ENCODE measurements at regions of chr10 and their contacts with region 1.

Region 1: GRCh38 chr10:17643755-17644484 is at the start of gene STAM:
- DNase-seq: peak; percentile 91
- H3K4me3 Mint-ChIP-seq: peak within 1 kb of the TSS; percentile 95
- H3K27ac Mint-ChIP-seq: peak within 1 kb of the TSS; percentile 100
- H3K4me1 Mint-ChIP-seq: peaks cover 12% of the 10 kb centered on the region
- H3K27me3 Mint-ChIP-seq: no peaks in the 10 kb centered on the region
- CTCF ChIP-seq: no peak
- total RNA-seq, gene STAM: 35.4 and 55.5 TPM in 2 replicates

Region 2: DNA sequence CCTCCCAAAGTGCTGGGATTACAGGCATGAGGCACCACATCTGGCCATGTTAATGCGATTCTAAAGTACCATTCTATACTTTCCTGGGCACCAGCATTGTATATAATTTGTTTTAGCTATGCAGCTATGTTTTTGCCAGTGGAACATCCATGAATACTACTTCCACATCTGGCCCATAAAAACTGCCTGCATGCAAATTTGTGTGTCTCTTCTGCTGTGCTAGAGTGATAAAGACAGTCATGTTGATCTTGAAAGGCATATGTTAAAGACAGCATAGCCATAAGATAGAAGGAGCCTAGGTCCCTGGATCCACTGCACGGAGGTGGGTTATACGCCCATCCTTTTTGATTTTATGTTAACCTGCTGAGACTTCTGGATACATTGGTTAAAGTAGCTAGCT is 79.0 kb before region 1 on chr10:
- CTCF ChIA-PET with region 1: no interaction called
- POLR2A ChIA-PET with region 1: no interaction called
- intact Hi-C with region 1: no loop called
- DNase-seq: no peak
- H3K4me3 Mint-ChIP-seq: no peak overlapping the region
- H3K27ac Mint-ChIP-seq: no peak overlapping the region
- H3K4me1 Mint-ChIP-seq: no peaks in the 10 kb centered on the region
- H3K27me3 Mint-ChIP-seq: no peaks in the 10 kb centered on the region
- CTCF ChIP-seq: no peak

Region 3: DNA sequence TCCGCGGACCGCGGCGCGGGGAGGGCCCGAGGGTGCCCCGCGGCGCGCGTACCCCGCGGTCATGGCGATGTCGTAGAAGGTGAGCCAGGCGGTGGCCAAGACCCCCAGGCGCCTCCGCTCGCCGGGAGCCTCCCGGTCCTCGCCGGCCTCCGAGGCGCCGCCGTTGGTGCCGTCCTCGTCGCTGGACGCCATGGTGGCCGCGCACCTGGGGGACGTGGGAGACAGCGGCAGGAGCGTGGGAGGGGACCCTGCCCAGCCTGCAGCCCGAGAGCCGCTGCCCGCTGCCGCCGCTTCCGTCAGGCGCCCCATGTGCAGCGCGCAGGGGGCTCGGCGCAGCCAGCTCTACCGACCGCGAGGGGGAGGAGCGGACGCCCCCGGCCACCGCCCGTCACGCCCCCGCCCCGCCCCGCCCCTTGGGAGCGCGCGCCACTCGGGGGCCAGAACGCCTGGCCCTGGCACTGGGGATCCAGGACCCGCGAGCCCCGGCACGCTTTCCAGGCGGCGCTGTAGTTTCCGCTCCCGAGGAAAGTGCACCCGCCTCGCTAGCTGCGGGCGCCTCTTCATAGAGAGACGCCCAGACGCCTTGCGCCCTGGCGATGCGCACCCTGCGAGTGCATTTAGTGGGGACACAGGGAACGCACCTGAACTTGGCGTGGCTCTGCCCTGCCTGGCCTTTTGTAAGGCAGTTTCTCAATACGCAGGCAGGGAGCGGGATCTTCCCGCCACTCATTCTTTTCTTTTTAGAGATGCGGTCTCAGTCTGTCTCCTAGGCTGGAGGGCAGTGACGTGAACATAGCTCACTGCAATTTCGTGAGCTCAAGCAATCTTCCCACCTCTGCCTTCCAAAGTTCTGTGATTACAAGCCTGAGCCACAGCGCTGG is 26.6 kb before region 1 on chr10 and contains the start of gene HACD1:
- CTCF ChIA-PET with region 1: interaction called, 13 read pairs
- POLR2A ChIA-PET with region 1: interaction called, 126 read pairs
- intact Hi-C with region 1: loop called (anchors 1 kb)
- DNase-seq: peak; percentile 74
- H3K4me3 Mint-ChIP-seq: peak within 1 kb of the TSS; percentile 80
- H3K27ac Mint-ChIP-seq: no peak within 1 kb of the TSS
- H3K4me1 Mint-ChIP-seq: peaks cover 8% of the 10 kb centered on the region
- H3K27me3 Mint-ChIP-seq: no peaks in the 10 kb centered on the region
- CTCF ChIP-seq: peak; percentile 10
- total RNA-seq, gene HACD1: 29.6 and 34.2 TPM in 2 replicates

Region 4: DNA sequence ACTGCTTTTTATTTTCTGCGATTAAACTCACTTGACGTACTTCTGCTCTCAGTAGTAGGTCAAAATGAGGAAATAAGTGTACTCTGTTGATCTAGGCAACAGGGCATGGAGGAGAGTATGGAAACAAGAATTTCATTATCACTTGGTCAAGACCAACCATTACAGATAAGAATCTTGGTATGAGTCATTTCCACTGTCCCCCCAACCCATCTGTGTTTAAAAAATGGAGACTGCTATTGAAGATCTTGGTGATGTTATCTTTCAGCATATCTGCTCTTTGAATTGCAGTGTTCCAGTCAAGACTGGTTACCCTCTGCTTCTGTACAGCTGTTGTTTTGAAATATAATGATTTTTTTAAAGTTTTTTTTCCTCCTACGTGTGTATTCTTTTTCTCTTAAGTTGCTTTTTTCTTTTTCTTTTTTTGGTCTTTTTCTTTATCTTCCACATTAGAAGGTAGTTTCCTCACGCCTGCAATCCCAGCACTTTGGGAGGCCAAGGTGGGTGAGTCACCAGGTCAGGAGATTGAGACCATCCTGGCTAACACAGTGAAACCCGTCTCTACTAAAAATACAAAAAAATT is 11.7 kb after region 1 on chr10:
- CTCF ChIA-PET with region 1: no interaction called
- POLR2A ChIA-PET with region 1: interaction called, 95 read pairs
- intact Hi-C with region 1: no loop called
- DNase-seq: peak; percentile 37
- H3K4me3 Mint-ChIP-seq: no peak overlapping the region
- H3K27ac Mint-ChIP-seq: peak overlapping the region; percentile 60
- H3K4me1 Mint-ChIP-seq: peaks cover 43% of the 10 kb centered on the region
- H3K27me3 Mint-ChIP-seq: no peaks in the 10 kb centered on the region
- CTCF ChIP-seq: no peak

Region 5: DNA sequence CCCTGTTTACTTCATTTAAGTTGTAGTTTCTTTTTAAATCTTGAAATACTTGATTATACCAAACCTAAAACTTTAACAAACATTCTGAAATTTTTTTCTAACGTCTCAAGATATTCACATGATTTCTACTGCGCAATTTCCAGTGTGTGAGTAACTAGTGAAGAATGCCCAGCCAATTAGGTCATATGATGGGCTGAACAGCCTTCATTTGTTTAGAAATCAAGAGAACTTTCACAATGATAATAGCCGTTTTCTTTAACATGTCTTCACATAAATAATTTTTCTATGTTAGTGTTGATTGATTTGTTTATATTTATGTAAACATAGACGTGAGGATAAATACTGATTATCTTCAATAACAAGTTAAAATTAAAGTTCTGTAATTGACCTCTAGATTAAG is 21.8 kb after region 1 on chr10:
- CTCF ChIA-PET with region 1: interaction called, 33 read pairs
- POLR2A ChIA-PET with region 1: interaction called, 151 read pairs
- intact Hi-C with region 1: no loop called
- DNase-seq: peak; percentile 82
- H3K4me3 Mint-ChIP-seq: peak overlapping the region; percentile 63
- H3K27ac Mint-ChIP-seq: peak overlapping the region; percentile 97
- H3K4me1 Mint-ChIP-seq: peaks cover 28% of the 10 kb centered on the region
- H3K27me3 Mint-ChIP-seq: no peaks in the 10 kb centered on the region
- CTCF ChIP-seq: no peak

Region 6: DNA sequence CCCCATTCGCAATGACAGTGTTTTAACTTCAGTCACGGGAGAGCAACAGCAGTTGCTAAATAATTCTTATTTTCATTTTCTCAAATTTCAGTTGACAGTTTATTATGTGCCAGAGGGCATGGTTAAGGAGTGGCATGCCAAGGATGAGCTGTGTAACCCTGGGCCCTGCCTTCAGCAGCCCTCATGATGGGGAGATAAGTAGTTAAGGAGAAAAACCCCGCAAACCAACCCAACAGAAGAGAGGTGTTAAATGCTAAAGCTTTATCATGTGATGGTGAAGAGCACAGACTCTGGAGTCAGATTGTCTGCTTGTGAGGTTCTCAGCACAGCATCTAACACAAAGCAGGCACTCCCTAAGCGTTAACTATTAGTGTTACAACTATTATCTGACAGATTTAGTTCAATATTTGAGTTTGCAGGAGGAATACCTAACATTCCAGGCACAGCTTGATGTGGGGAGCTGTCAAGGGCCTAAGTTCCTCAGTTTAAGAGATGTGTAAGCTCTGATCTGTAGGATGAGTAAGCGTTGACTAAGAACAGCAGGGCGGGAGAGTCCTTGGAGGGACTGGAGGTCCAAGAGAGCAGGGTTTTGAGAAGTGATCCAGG is 29.6 kb after region 1 on chr10:
- CTCF ChIA-PET with region 1: interaction called, 33 read pairs
- POLR2A ChIA-PET with region 1: interaction called, 151 read pairs
- intact Hi-C with region 1: no loop called
- DNase-seq: peak; percentile 79
- H3K4me3 Mint-ChIP-seq: peak overlapping the region; percentile 7
- H3K27ac Mint-ChIP-seq: peak overlapping the region; percentile 77
- H3K4me1 Mint-ChIP-seq: peaks cover 24% of the 10 kb centered on the region
- H3K27me3 Mint-ChIP-seq: no peaks in the 10 kb centered on the region
- CTCF ChIP-seq: no peak

Measured in MCF 10A (cell line).